ENCODE measurements at regions of chr4 and their contacts with region 1.

Region 1: DNA sequence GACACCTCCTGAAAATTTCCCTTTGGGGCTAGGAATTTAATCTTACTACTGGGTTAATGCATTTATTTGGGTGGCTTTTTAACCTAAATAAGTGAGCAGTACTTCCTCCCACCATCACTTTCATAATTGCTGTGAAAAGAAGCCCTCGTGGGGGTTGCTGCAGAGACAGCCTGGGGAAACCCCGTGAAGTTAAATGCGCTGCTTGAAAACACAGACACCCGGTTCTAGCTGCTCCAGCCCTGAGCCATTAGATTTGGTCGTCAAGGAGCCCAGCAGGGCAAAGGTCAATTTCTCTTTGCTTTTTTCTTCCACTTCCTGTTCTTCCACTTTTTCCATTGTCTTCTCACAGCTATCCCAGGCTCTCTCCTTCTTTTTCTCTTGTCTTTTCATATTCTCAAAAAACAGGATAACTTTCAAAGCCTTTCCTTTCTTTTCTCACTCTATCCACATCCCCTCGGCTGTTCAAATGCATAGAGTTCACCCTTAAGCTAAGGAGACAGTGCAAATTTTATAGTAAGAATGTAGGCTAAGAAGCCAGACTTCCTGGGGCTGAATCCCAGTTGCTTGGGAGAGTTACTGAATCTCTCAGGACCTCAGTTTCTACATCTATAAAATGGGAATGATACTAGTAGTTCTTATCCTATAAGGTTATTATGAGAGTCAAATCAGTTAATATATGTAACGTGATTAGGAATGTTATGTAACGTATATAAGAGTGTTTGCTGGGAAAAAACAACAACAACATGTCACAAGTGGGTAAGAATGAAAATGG is 91.5 kb upstream of the ZNF827 start:
- DNase-seq: peak; percentile 16
- H3K4me3 Mint-ChIP-seq: peak overlapping the region; percentile 17
- H3K27ac Mint-ChIP-seq: peak overlapping the region; percentile 62
- H3K4me1 Mint-ChIP-seq: peaks cover 29% of the 10 kb centered on the region
- H3K27me3 Mint-ChIP-seq: no peaks in the 10 kb centered on the region
- CTCF ChIP-seq: no peak

Region 2: DNA sequence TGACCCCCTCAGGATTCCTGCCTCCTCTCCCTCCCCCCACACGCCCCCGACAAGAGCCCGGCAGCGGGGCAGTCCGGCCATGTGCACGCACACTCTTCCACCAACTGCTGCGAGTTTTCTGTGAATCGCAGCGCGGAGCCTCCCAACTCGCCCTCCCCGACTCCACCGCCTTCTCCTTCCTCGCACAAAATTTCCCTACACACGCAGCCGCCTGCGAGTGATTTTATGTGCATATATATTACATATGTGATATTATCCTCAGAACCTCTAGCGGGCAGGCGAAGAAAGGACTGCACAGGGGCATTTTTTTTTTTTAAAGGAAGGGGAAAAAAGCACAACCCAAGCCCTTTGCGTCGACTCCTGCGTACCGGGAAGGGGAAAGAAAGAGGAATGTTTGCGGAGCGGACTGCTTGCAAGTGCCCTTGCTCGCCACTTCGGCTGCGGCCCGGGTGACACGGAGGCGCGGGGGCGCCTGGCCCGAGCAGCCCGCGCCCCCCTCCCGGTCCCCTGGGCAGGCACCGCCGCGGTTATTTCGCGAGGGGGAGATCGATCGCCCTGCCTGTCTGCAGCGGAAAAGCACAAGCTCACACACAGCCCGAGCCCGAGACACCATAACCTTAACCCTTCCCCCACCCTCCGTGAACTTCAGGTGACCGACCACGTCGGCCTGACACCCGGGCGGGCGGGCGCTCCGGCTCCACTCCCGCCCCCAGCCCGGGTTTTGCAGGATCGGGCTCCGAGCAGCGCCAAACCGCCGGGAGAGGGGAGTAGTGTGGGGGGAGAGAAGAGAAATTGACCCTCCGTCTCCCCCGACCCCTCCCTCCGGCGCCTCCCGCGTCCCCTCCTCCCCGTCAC is 93.8 kb before region 1 on chr4:
- CTCF ChIA-PET with region 1: interaction called, 3 read pairs
- intact Hi-C with region 1: loop called (anchors 5 kb)
- DNase-seq: peak; percentile 74
- H3K4me3 Mint-ChIP-seq: peak overlapping the region; percentile 80
- H3K27ac Mint-ChIP-seq: peak overlapping the region; percentile 95
- H3K4me1 Mint-ChIP-seq: peaks cover 35% of the 10 kb centered on the region
- H3K27me3 Mint-ChIP-seq: no peaks in the 10 kb centered on the region
- CTCF ChIP-seq: no peak

Region 3: DNA sequence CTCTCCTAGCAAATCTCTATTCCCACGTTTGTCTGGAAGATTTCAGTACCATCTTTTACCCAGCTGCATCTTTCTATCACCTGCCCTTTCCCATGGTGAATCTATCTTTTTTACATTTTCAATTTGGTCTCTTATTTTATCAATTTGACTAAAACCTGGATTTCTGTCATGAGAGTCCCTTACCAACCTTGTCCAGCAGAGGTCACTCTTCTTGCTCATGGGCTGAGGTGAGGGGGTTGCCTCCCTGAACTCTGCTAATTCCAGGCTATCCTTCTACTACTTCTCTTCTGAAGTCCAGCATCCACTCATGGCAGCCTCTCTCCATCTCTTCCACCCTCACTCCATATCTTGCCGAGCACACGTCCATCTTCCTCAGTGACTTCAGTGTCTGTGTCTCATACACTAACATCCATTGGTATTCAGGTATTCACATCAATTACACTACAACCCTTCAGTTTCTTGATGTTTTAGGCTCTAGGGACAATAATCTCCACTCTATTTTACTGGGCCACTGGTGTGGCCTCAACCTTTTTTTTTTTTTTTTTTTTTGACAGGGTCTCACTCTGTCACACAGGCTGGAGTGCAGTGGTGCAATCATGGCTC is 73.7 kb before region 1 on chr4:
- CTCF ChIA-PET with region 1: no interaction called
- intact Hi-C with region 1: loop called (anchors 5 kb)
- DNase-seq: peak; percentile 17
- H3K4me3 Mint-ChIP-seq: no peak overlapping the region
- H3K27ac Mint-ChIP-seq: no peak overlapping the region
- H3K4me1 Mint-ChIP-seq: peaks cover 30% of the 10 kb centered on the region
- H3K27me3 Mint-ChIP-seq: no peaks in the 10 kb centered on the region
- CTCF ChIP-seq: peak; percentile 70

Region 4: GRCh38 chr4:146098397-146098796 is 68.3 kb after region 1 on chr4:
- CTCF ChIA-PET with region 1: no interaction called
- intact Hi-C with region 1: loop called (anchors 2 kb)
- DNase-seq: no peak
- H3K4me3 Mint-ChIP-seq: no peak overlapping the region
- H3K27ac Mint-ChIP-seq: no peak overlapping the region
- H3K4me1 Mint-ChIP-seq: no peaks in the 10 kb centered on the region
- H3K27me3 Mint-ChIP-seq: no peaks in the 10 kb centered on the region
- CTCF ChIP-seq: no peak

Measured in Calu3 (cell line).